CD8-positive, alpha-beta T cell (primary cell): ENCODE measurements at regions of chr11 and their contacts with region 1.

Region 1: GRCh38 chr11:108664730-108665525 is at the start of gene DDX10:
- DNase-seq: peak; percentile 97 to 99 (median 99)
- ATAC-seq: peak; percentile 99
- H3K4me3 ChIP-seq: peak within 1 kb of the TSS; percentile 82 to 85
- H3K4me3 Mint-ChIP-seq: peak within 1 kb of the TSS; percentile 100
- H3K27ac ChIP-seq: peak within 1 kb of the TSS; percentile 66 to 71
- H3K27ac Mint-ChIP-seq: peak within 1 kb of the TSS; percentile 98
- H3K4me1 ChIP-seq: peaks cover 30% of the 10 kb centered on the region
- H3K4me1 Mint-ChIP-seq: peaks cover 49% of the 10 kb centered on the region
- H3K27me3 ChIP-seq: no peaks in the 10 kb centered on the region
- H3K27me3 Mint-ChIP-seq: no peaks in the 10 kb centered on the region
- CTCF ChIP-seq: no peak
- total RNA-seq, gene DDX10: 15.4 to 16.5 TPM

Region 2: GRCh38 chr11:107457558-107458271 is 1207.2 kb before region 1 on chr11 and contains the start of gene CWF19L2:
- CTCF ChIA-PET with region 1: no interaction called
- POLR2A ChIA-PET with region 1: no interaction called
- intact Hi-C with region 1: loop called in 1 of 2 experiments (anchors 5 kb)
- DNase-seq: peak; percentile 80 to 96 (median 88)
- ATAC-seq: peak; percentile 96
- H3K4me3 ChIP-seq: peak within 1 kb of the TSS; percentile 70 to 82
- H3K4me3 Mint-ChIP-seq: peak within 1 kb of the TSS; percentile 92
- H3K27ac ChIP-seq: peak within 1 kb of the TSS; percentile 73 to 81
- H3K27ac Mint-ChIP-seq: peak within 1 kb of the TSS; percentile 94
- H3K4me1 ChIP-seq: peaks cover 7% of the 10 kb centered on the region
- H3K4me1 Mint-ChIP-seq: peaks cover 32% of the 10 kb centered on the region
- H3K27me3 ChIP-seq: no peaks in the 10 kb centered on the region
- H3K27me3 Mint-ChIP-seq: peaks cover 2% of the 10 kb centered on the region
- CTCF ChIP-seq: no peak
- total RNA-seq, gene CWF19L2: 24.3 to 25.2 TPM

Region 3: GRCh38 chr11:108008656-108009496 is 656.1 kb before region 1 on chr11 and contains the start of gene CUL5:
- CTCF ChIA-PET with region 1: interaction called, 4 read pairs
- POLR2A ChIA-PET with region 1: interaction called, 3 read pairs
- intact Hi-C with region 1: loop called (anchors 2 kb)
- DNase-seq: peak; percentile 83 to 95 (median 89)
- ATAC-seq: peak; percentile 88
- H3K4me3 ChIP-seq: peak within 1 kb of the TSS; percentile 99
- H3K4me3 Mint-ChIP-seq: no peak within 1 kb of the TSS
- H3K27ac ChIP-seq: peak within 1 kb of the TSS; percentile 97 to 98
- H3K27ac Mint-ChIP-seq: peak within 1 kb of the TSS; percentile 98
- H3K4me1 ChIP-seq: peaks cover 24% of the 10 kb centered on the region
- H3K4me1 Mint-ChIP-seq: peaks cover 3% of the 10 kb centered on the region
- H3K27me3 ChIP-seq: no peaks in the 10 kb centered on the region
- H3K27me3 Mint-ChIP-seq: no peaks in the 10 kb centered on the region
- CTCF ChIP-seq: peak; percentile 70
- total RNA-seq, gene CUL5: 73.3 to 75.0 TPM

Region 4: GRCh38 chr11:108121274-108122155 is 543.4 kb before region 1 on chr11 and contains the start of gene ACAT1:
- CTCF ChIA-PET with region 1: no interaction called
- POLR2A ChIA-PET with region 1: no interaction called
- intact Hi-C with region 1: loop called (anchors 1 to 5 kb)
- DNase-seq: peak; percentile 89 to 98 (median 97)
- ATAC-seq: peak; percentile 98
- H3K4me3 ChIP-seq: peak within 1 kb of the TSS; percentile 82 to 89
- H3K4me3 Mint-ChIP-seq: peak within 1 kb of the TSS; percentile 88
- H3K27ac ChIP-seq: peak within 1 kb of the TSS; percentile 59 to 70
- H3K27ac Mint-ChIP-seq: peak within 1 kb of the TSS; percentile 78
- H3K4me1 ChIP-seq: peaks cover 31% of the 10 kb centered on the region
- H3K4me1 Mint-ChIP-seq: peaks cover 43% of the 10 kb centered on the region
- H3K27me3 ChIP-seq: no peaks in the 10 kb centered on the region
- H3K27me3 Mint-ChIP-seq: no peaks in the 10 kb centered on the region
- CTCF ChIP-seq: no peak
- total RNA-seq, gene ACAT1: 14.2 to 15.0 TPM

Region 5: DNA sequence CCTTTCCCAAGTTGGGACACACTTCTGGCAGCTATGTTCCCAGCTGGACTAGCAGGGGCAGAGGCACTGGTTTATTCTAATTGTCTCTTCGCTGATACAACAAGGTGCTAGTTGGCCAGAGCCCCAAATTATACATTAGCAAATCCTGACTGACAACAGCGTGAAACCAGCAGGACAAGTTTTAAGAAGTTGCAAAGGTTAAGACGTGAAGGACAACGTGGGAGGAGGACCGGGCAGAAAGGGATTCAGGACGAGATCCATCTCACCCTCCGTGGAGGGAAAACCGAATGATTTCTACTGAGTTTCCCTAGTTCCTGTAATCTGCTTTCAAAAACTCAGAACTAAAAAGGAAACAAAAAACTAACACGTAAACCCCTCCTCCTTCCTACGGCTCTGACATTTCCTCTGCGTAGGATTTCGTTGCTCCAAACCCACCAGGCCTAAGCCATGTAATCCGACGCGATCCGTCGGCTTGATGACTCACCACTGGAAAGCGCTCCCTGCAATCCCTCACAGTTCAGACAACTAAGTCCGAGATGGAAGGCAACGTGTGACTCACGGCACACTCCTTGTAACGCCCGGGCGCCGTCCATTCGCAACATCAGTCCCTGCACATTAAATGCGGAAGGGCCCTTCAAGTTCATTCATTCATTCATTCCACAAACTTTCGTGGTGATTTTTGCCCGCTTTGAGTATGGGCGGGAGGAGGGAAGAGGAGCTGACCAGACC is 167.4 kb before region 1 on chr11:
- CTCF ChIA-PET with region 1: no interaction called
- POLR2A ChIA-PET with region 1: interaction called, 3 read pairs
- intact Hi-C with region 1: loop called (anchors 2 to 10 kb)
- DNase-seq: peak; percentile 24 to 91 (median 65)
- ATAC-seq: peak; percentile 87
- H3K4me3 ChIP-seq: peak overlapping the region; percentile 75 to 78
- H3K4me3 Mint-ChIP-seq: peak overlapping the region; percentile 98
- H3K27ac ChIP-seq: peak overlapping the region; percentile 92 to 94
- H3K27ac Mint-ChIP-seq: peak overlapping the region; percentile 99
- H3K4me1 ChIP-seq: peaks cover 9% of the 10 kb centered on the region
- H3K4me1 Mint-ChIP-seq: peaks cover 28% of the 10 kb centered on the region
- H3K27me3 ChIP-seq: no peaks in the 10 kb centered on the region
- H3K27me3 Mint-ChIP-seq: no peaks in the 10 kb centered on the region
- CTCF ChIP-seq: no peak

Region 6: GRCh38 chr11:108593214-108593922 is 71.6 kb before region 1 on chr11 and contains the start of gene EXPH5:
- CTCF ChIA-PET with region 1: no interaction called
- POLR2A ChIA-PET with region 1: interaction called, 4 read pairs
- intact Hi-C with region 1: loop called (anchors 2 to 5 kb)
- DNase-seq: peak; percentile 65 to 91 (median 85)
- ATAC-seq: peak; percentile 94
- H3K4me3 ChIP-seq: peak within 1 kb of the TSS; percentile 63 to 66
- H3K4me3 Mint-ChIP-seq: peak within 1 kb of the TSS; percentile 95
- H3K27ac ChIP-seq: peak within 1 kb of the TSS; percentile 22 to 69
- H3K27ac Mint-ChIP-seq: peak within 1 kb of the TSS; percentile 90
- H3K4me1 ChIP-seq: peaks cover 14% of the 10 kb centered on the region
- H3K4me1 Mint-ChIP-seq: peaks cover 16% of the 10 kb centered on the region
- H3K27me3 ChIP-seq: peaks cover 0 to 4% of the 10 kb centered on the region in 2 experiments
- H3K27me3 Mint-ChIP-seq: peaks cover 13% of the 10 kb centered on the region
- CTCF ChIP-seq: no peak
- total RNA-seq, gene EXPH5: 1.5 to 1.7 TPM

Region 7: GRCh38 chr11:108912581-108912980 is 247.7 kb after region 1 on chr11:
- CTCF ChIA-PET with region 1: no interaction called
- POLR2A ChIA-PET with region 1: no interaction called
- intact Hi-C with region 1: no loop called
- DNase-seq: no peak
- ATAC-seq: no peak
- H3K4me3 ChIP-seq: no peak overlapping the region
- H3K4me3 Mint-ChIP-seq: no peak overlapping the region
- H3K27ac ChIP-seq: no peak overlapping the region
- H3K27ac Mint-ChIP-seq: no peak overlapping the region
- H3K4me1 ChIP-seq: no peaks in the 10 kb centered on the region
- H3K4me1 Mint-ChIP-seq: peaks cover under 1% of the 10 kb centered on the region
- H3K27me3 ChIP-seq: no peaks in the 10 kb centered on the region
- H3K27me3 Mint-ChIP-seq: no peaks in the 10 kb centered on the region
- CTCF ChIP-seq: no peak

Region 8: DNA sequence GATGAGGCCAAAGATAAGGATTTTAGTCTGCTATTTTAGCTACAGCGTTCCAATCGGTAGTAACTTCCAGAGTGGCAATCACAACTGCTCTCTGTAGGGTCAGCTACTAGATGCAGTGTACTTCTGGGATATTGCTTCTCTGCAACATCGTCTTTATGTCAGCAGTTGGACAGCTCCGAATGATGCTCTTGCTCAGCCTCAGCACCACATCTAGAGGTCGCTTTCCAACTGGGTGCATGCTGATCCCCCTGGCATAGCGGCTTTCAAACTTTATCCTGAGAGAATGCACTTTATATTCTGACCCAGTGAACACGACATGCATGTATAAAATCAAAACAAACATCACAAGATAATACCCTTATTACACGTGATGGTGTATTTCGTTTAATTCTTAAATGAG is 976.6 kb after region 1 on chr11:
- CTCF ChIA-PET with region 1: no interaction called
- POLR2A ChIA-PET with region 1: no interaction called
- intact Hi-C with region 1: no loop called
- DNase-seq: no peak
- ATAC-seq: no peak
- H3K4me3 ChIP-seq: no peak overlapping the region
- H3K4me3 Mint-ChIP-seq: no peak overlapping the region
- H3K27ac ChIP-seq: no peak overlapping the region
- H3K27ac Mint-ChIP-seq: no peak overlapping the region
- H3K4me1 ChIP-seq: no peaks in the 10 kb centered on the region
- H3K4me1 Mint-ChIP-seq: no peaks in the 10 kb centered on the region
- H3K27me3 ChIP-seq: no peaks in the 10 kb centered on the region
- H3K27me3 Mint-ChIP-seq: no peaks in the 10 kb centered on the region
- CTCF ChIP-seq: no peak